ENCODE measurements at regions of chr15 and their contacts with region 1.

Region 1: GRCh38 chr15:48112242-48112641 is 8.5 kb upstream of the SLC24A5 start:
- DNase-seq: no peak
- ATAC-seq: peak; percentile 84
- H3K4me3 ChIP-seq: no peak overlapping the region
- H3K27ac ChIP-seq: no peak overlapping the region
- H3K4me1 ChIP-seq: no peaks in the 10 kb centered on the region
- H3K27me3 ChIP-seq: peaks cover 7% of the 10 kb centered on the region; the same call in 1 of the 2 replicates
- CTCF ChIP-seq: peak; percentile 69

Region 2: GRCh38 chr15:48177766-48178647 is 65.8 kb after region 1 on chr15 and contains the start of gene MYEF2:
- CTCF ChIA-PET with region 1: no interaction called
- POLR2A ChIA-PET with region 1: no interaction called
- in situ Hi-C with region 1: no loop called
- intact Hi-C with region 1: no loop called
- DNase-seq: no peak
- ATAC-seq: peak; percentile 98
- H3K4me3 ChIP-seq: peak within 1 kb of the TSS; percentile 72 to 73
- H3K27ac ChIP-seq: peak within 1 kb of the TSS; percentile 88
- H3K4me1 ChIP-seq: peaks cover 14% of the 10 kb centered on the region; the same call in 1 of the 2 replicates
- H3K27me3 ChIP-seq: no peaks in the 10 kb centered on the region
- CTCF ChIP-seq: no peak
- total RNA-seq, gene MYEF2: 71.3 TPM

Region 3: GRCh38 chr15:48250640-48251076 is 138.4 kb after region 1 on chr15:
- CTCF ChIA-PET with region 1: interaction called, 3 read pairs
- POLR2A ChIA-PET with region 1: no interaction called
- in situ Hi-C with region 1: no loop called
- intact Hi-C with region 1: loop called (anchors 5 kb)
- DNase-seq: peak; percentile 56
- ATAC-seq: peak; percentile 75; the same call in 1 of the 2 replicates
- H3K4me3 ChIP-seq: no peak overlapping the region
- H3K27ac ChIP-seq: no peak overlapping the region
- H3K4me1 ChIP-seq: no peaks in the 10 kb centered on the region
- H3K27me3 ChIP-seq: peaks cover 5% of the 10 kb centered on the region
- CTCF ChIP-seq: peak; percentile 78

Region 4: DNA sequence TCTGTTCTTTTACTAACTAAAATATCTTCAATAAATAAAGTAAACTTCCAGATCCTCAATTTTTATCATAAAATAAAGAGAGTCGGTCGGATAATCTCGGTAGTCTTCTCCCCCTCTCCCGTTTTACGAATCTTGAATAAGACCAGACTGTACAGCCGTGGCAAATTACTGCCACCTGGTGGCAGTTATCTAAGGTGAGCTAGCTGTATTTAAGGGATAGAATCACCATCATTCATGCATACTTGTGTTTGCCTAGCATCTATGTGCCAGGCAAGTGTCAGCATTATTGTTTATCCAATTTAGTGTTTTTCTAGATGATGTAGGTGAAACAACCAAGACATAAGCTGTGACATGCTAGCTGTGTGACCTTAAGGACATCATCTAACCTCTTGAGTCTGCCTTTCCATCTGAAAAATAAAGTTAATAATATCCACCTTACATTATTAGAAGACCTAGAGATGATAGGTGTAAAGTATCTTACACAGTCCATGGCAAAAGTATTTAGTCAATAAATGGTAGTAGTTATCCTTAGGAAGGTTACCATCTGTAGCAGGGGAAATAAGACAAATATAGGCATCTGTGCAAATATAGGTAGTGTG is 240.3 kb after region 1 on chr15:
- CTCF ChIA-PET with region 1: no interaction called
- POLR2A ChIA-PET with region 1: no interaction called
- in situ Hi-C with region 1: no loop called
- intact Hi-C with region 1: no loop called
- DNase-seq: peak; percentile 50
- ATAC-seq: peak; percentile 97
- H3K4me3 ChIP-seq: no peak overlapping the region
- H3K27ac ChIP-seq: no peak overlapping the region
- H3K4me1 ChIP-seq: no peaks in the 10 kb centered on the region
- H3K27me3 ChIP-seq: no peaks in the 10 kb centered on the region
- CTCF ChIP-seq: peak; percentile 89

Measured in Panc1 (cell line).